ENCODE measurements at regions of chr9 and their contacts with region 1.

Region 1: DNA sequence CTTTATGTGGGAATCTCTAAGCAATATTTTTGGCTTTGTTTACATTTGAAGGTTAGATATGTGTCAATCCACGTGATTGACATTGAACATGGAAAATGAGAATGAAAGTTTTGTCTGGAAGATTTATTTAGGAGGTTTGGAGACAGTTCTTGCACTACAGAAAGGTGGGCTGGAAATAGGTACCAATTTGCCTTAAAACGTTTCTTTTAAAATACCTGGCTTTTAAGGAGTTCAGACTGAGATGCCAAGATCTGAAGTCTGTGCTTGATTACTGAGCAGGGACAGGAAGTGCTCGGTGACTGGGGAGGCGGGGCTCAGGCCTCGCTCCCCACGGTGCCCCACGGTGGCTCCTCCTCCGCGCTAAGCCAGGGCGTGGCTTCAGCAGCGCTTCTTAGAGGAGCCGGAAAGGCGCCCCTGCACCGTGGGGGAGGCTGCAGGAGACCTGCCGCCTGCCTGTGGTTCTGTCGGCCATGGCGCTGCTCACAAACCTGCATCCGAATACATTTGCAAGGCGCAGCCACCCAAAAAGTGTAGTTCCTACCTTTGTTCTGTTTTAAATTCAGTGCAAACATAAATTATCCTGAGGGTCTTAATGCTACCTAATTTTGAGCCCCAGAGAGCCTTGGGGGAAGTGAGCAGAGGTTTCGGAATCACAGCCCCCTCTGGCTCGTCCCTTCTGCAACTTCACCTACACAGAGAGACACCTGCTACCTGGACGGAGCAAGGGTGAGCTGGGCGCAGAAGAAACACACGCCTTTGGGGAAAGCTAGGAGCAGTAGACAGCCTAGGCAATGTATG is 49.2 kb downstream of the USP20 start:
- DNase-seq: peak; percentile 94
- H3K4me3 Mint-ChIP-seq: peak overlapping the region; percentile 94
- H3K27ac Mint-ChIP-seq: peak overlapping the region; percentile 100
- H3K4me1 Mint-ChIP-seq: peaks cover 55% of the 10 kb centered on the region
- H3K27me3 Mint-ChIP-seq: peaks cover 2% of the 10 kb centered on the region

Region 2: DNA sequence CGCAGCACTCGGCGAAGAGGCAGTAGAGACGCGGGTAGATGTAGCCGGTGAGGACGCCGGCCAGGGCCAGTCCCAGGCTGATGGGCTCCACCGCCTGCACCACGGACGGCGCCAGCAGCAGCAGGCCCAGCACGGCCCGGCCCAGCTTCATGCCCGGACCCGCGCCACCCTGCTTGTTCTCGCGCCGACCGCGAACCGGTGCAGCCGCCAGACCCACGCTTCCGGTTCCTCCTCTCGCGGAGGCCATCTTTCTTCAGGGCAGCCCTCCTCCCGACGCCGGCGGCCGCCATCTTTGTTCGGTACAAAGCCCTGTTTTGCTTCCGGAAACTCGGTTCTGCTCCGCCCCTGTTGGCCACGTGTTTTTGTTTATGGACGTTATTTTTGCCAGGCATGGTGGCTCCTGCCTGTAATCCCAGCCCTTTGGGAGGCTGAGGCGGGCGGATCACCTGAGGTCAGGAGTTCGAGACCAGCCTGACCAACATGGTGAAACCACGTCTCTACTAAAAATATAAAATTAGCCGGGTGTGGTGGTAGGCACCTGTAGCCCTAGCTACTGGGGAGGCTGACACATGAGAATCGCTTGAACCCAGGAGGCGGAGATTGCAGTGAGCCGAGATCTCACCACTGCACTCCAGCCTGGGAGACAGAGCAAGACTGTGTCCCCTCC is 60.4 kb before region 1 on chr9 and contains the start of gene TOR1A:
- intact Hi-C with region 1: loop called (anchors 1 kb)
- DNase-seq: peak; percentile 89
- H3K4me3 Mint-ChIP-seq: peak within 1 kb of the TSS; percentile 91
- H3K27ac Mint-ChIP-seq: peak within 1 kb of the TSS; percentile 86
- H3K4me1 Mint-ChIP-seq: peaks cover 12% of the 10 kb centered on the region
- H3K27me3 Mint-ChIP-seq: no peaks in the 10 kb centered on the region
- total RNA-seq, gene TOR1A: 61.3 and 62.1 TPM in 2 replicates

Region 3: GRCh38 chr9:129868916-129869486 is 15.4 kb before region 1 on chr9:
- intact Hi-C with region 1: loop called (anchors 1 kb)
- DNase-seq: peak; percentile 83
- H3K4me3 Mint-ChIP-seq: peak overlapping the region; percentile 47
- H3K27ac Mint-ChIP-seq: peak overlapping the region; percentile 87
- H3K4me1 Mint-ChIP-seq: peaks cover 60% of the 10 kb centered on the region
- H3K27me3 Mint-ChIP-seq: no peaks in the 10 kb centered on the region

Region 4: GRCh38 chr9:129962889-129963703 is 78.7 kb after region 1 on chr9:
- intact Hi-C with region 1: loop called (anchors 1 kb)
- DNase-seq: peak; percentile 70
- H3K4me3 Mint-ChIP-seq: peak overlapping the region; percentile 76
- H3K27ac Mint-ChIP-seq: peak overlapping the region; percentile 88
- H3K4me1 Mint-ChIP-seq: peaks cover 60% of the 10 kb centered on the region
- H3K27me3 Mint-ChIP-seq: no peaks in the 10 kb centered on the region

Region 5: DNA sequence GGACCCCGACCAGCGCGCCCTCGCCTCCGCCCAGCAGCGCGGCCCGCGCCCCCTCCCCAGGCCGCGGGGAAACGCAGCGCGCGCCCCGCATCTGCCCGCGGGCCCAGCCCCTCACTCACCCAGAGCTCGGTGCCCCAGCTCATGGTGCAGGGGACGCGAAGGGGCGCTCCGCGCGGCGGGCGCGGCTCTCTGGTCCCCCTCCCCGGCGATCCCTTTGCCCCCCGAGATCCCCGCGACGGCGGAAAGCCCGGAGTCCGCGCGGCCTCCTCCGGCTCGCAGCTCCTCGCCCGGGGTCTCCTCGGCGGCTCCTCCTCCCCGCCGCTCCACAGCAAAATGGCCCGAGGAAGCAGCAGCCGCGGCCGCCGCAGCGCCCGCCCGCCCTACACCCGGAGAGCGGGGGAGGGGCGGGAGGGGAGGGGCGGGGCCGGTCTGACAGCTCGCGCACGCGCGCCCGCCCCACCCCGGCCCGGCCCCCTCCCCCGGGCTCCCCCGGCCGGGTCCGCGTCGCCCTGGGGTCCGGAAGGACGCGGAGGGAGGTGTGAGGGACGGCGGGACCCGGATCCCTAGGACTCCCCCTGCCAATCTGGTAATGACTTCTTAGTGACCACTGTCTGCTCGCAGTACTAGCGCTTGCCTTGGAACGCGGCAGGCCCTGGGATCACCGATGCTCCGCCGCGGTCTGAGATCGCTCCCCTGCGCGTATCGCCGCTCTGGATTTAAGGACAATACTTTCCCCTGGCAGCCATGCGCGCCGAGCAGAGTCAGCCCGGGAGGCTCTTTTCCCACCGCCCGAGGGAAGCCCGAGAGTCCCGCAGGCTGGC is 158.6 kb after region 1 on chr9 and contains the start of gene FNBP1:
- intact Hi-C with region 1: loop called (anchors 1 kb)
- DNase-seq: peak; percentile 78
- H3K4me3 Mint-ChIP-seq: peak within 1 kb of the TSS; percentile 97
- H3K27ac Mint-ChIP-seq: peak within 1 kb of the TSS; percentile 99
- H3K4me1 Mint-ChIP-seq: peaks cover 55% of the 10 kb centered on the region
- H3K27me3 Mint-ChIP-seq: no peaks in the 10 kb centered on the region
- total RNA-seq, gene FNBP1: 195 and 202 TPM in 2 replicates

Region 6: GRCh38 chr9:130243015-130243734 is 358.8 kb after region 1 on chr9:
- intact Hi-C with region 1: loop called (anchors 2 kb)
- DNase-seq: peak; percentile 61
- H3K4me3 Mint-ChIP-seq: no peak overlapping the region
- H3K27ac Mint-ChIP-seq: no peak overlapping the region
- H3K4me1 Mint-ChIP-seq: peaks cover 25% of the 10 kb centered on the region
- H3K27me3 Mint-ChIP-seq: peaks cover 2% of the 10 kb centered on the region

Region 7: GRCh38 chr9:130660683-130661450 is 776.4 kb after region 1 on chr9:
- intact Hi-C with region 1: no loop called
- DNase-seq: no peak
- H3K4me3 Mint-ChIP-seq: no peak overlapping the region
- H3K27ac Mint-ChIP-seq: no peak overlapping the region
- H3K4me1 Mint-ChIP-seq: no peaks in the 10 kb centered on the region
- H3K27me3 Mint-ChIP-seq: peaks cover 58% of the 10 kb centered on the region